Activated naive CD4-positive, alpha-beta T cell treated with anti-CD3 and anti-CD28 coated beads for 36 hours (primary cell): ENCODE measurements at regions of chr11 and their contacts with region 1.

Region 1: GRCh38 chr11:47667135-47667534 is 24.8 kb upstream of the MTCH2 start:
- DNase-seq: no peak
- H3K4me3 Mint-ChIP-seq: no peak overlapping the region
- H3K27ac Mint-ChIP-seq: no peak overlapping the region
- H3K4me1 Mint-ChIP-seq: peaks cover 24% of the 10 kb centered on the region
- H3K27me3 Mint-ChIP-seq: no peaks in the 10 kb centered on the region

Region 2: GRCh38 chr11:47514825-47515647 is 152.1 kb before region 1 on chr11:
- CTCF ChIA-PET with region 1: no interaction called
- intact Hi-C with region 1: loop called (anchors 1 kb)
- DNase-seq: peak; percentile 66
- H3K4me3 Mint-ChIP-seq: no peak overlapping the region
- H3K27ac Mint-ChIP-seq: peak overlapping the region; percentile 28
- H3K4me1 Mint-ChIP-seq: peaks cover 95% of the 10 kb centered on the region
- H3K27me3 Mint-ChIP-seq: no peaks in the 10 kb centered on the region

Region 3: DNA sequence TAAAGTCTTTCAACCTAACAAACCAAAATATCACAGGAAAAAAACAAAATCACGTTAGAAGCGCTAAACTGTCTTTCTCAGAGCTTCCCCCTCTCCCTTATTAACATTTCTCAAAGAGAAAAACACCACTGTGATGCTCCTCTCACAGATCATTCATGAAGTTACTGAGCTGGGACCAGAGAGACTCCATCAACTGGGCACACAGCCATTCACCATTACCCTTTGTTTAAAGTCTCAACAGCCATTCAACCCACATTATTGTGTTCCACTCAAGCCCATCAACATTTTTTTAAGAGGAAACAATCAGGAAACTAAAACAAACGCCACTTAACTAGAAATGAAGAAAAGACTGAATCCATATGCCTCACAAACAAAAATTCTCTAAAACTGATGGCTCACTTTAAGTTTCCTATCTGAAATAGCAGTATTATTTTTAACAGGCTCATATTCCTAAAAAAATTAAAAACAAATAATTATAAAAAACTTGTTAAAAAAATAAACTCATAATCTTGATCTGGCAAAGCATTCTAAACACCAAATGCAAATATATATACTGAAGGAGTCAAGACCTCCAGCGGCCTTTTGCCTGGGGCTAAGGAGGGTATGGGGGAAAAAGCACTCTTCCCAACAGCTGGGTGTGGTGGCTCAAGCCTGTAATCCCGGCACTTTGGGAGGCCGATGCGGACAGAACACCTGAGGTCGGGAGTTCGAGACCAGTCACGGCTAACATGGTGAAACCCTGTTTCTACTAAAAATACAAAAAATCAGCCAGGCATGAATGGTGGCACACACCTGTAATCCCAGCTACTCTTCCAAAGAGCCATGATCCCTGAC is 128.2 kb before region 1 on chr11:
- CTCF ChIA-PET with region 1: no interaction called
- intact Hi-C with region 1: loop called (anchors 1 kb)
- DNase-seq: no peak
- H3K4me3 Mint-ChIP-seq: no peak overlapping the region
- H3K27ac Mint-ChIP-seq: peak overlapping the region; percentile 91
- H3K4me1 Mint-ChIP-seq: peaks cover 64% of the 10 kb centered on the region
- H3K27me3 Mint-ChIP-seq: no peaks in the 10 kb centered on the region

Region 4: GRCh38 chr11:47642099-47642855 is 24.9 kb before region 1 on chr11 and contains the start of gene MTCH2:
- CTCF ChIA-PET with region 1: no interaction called
- intact Hi-C with region 1: loop called (anchors 1 kb)
- DNase-seq: peak; percentile 97
- H3K4me3 Mint-ChIP-seq: peak within 1 kb of the TSS; percentile 91
- H3K27ac Mint-ChIP-seq: peak within 1 kb of the TSS; percentile 81
- H3K4me1 Mint-ChIP-seq: peaks cover 19% of the 10 kb centered on the region
- H3K27me3 Mint-ChIP-seq: no peaks in the 10 kb centered on the region
- total RNA-seq, gene MTCH2: 93.7 to 95.1 TPM

Region 5: GRCh38 chr11:47797633-47798032 is 130.5 kb after region 1 on chr11:
- CTCF ChIA-PET with region 1: no interaction called
- intact Hi-C with region 1: loop called (anchors 1 kb)
- DNase-seq: peak; percentile 80
- H3K4me3 Mint-ChIP-seq: no peak overlapping the region
- H3K27ac Mint-ChIP-seq: peak overlapping the region; percentile 84
- H3K4me1 Mint-ChIP-seq: peaks cover 12% of the 10 kb centered on the region
- H3K27me3 Mint-ChIP-seq: no peaks in the 10 kb centered on the region

Region 6: GRCh38 chr11:47928426-47928825 is 261.3 kb after region 1 on chr11:
- CTCF ChIA-PET with region 1: no interaction called
- intact Hi-C with region 1: loop called (anchors 1 kb)
- DNase-seq: no peak
- H3K4me3 Mint-ChIP-seq: no peak overlapping the region
- H3K27ac Mint-ChIP-seq: no peak overlapping the region
- H3K4me1 Mint-ChIP-seq: peaks cover 28% of the 10 kb centered on the region
- H3K27me3 Mint-ChIP-seq: no peaks in the 10 kb centered on the region

Region 7: DNA sequence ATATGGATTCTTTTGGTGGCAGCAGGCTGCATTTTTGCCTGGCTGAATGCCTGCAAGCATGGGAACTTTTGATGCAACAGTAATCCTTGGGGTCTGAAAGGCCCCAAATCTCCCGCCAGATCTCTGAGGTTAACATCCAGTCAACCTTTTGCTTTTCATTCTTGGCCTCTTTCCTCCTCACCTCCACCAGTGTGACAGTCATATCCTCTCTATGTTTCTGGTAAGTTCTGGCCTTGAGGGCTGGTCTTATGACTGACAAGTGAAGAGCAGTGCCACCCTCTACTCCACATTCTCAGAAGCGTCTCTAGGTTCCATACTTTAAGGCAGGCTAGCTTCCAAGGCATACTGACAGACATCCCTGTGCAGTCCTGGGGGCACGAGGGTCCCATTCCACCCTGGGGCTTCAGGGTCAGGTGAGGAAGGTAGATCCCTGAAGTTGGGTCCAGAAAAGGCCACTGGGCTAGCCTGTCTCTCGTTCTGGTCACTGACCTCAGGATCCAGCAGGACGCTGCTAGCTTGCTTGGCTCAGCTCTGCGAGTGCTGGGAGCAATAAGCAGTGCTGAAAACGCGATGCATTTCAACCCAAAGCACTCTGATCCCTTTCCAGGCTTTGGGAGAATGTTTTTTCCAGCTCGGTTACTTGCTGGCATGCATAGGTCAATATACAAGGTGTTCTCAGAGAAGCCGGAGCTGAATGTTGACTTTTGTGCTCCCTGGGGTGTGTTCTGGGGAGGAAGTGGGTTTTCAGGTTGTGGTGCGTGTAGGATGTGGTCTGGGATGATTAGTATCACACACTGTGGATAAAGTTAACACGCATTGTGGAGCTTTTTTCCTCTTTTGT is 388.4 kb after region 1 on chr11:
- CTCF ChIA-PET with region 1: no interaction called
- intact Hi-C with region 1: loop called (anchors 2 kb)
- DNase-seq: peak; percentile 88
- H3K4me3 Mint-ChIP-seq: peak overlapping the region; percentile 54
- H3K27ac Mint-ChIP-seq: peak overlapping the region; percentile 76
- H3K4me1 Mint-ChIP-seq: peaks cover 84% of the 10 kb centered on the region
- H3K27me3 Mint-ChIP-seq: no peaks in the 10 kb centered on the region